ENCODE measurements at regions of chr6 and their contacts with region 1.

Region 1: GRCh38 chr6:87472525-87473418 is at the start of gene SLC35A1:
- DNase-seq: peak; percentile 80 to 92 (median 86)
- H3K4me3 ChIP-seq: peak within 1 kb of the TSS; percentile 67 to 72
- H3K4me3 Mint-ChIP-seq: peak within 1 kb of the TSS; percentile 97 to 99 (median 99)
- H3K27ac ChIP-seq: peak within 1 kb of the TSS; percentile 94
- H3K27ac Mint-ChIP-seq: peak within 1 kb of the TSS; percentile 93 to 100 (median 100)
- H3K4me1 ChIP-seq: peaks cover 18% of the 10 kb centered on the region
- H3K4me1 Mint-ChIP-seq: peaks cover 9 to 27% (median 16%) of the 10 kb centered on the region in 4 donors
- H3K27me3 ChIP-seq: no peaks in the 10 kb centered on the region
- H3K27me3 Mint-ChIP-seq: peaks cover 0 to 2% of the 10 kb centered on the region in 2 donors
- total RNA-seq, gene SLC35A1: 20.4 to 26.2 TPM

Region 2: DNA sequence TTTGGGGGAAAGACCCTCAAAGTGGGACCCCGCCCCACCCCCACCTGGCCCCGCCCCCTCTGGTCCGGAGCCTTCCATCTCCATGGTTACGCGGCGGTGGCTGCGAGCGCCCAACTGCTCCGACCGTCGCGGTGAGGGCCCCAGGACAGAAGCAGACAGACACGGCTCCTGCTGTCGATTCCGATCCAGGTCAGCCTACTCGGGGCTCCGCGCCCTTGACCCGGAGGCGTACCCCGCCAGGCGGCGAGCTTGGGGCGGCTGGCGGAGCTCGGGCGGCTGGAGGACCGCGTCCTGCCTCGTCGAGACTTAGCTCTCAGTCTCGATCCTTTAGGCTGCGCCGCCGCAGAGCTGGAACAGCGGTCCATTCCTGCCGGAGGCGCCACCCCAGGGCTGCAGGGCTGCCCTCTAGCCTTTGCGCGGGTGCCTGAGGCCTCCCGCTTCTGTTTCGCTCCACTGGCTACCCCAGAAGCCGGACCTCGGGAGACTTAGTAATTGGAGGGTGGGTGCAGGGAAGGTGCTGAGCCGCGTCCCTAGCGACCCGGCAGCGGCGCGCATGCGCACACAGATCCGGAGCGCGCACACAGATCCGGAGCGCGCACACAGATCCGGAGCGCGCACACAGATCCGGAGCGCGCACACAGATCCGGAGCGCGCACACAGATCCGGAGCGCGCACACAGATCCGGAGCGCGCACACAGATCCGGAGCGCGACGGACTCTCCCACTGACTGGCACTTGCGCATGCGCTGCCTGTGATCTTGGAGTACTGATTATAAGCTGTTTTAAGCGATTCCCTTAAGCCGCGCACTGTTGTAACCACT is 64.7 kb before region 1 on chr6 and contains the start of gene CFAP206:
- CTCF ChIA-PET with region 1: interaction called, 3 read pairs
- POLR2A ChIA-PET with region 1: interaction called, 8 read pairs
- intact Hi-C with region 1: loop called (anchors 1 kb)
- DNase-seq: peak; percentile 79 to 88 (median 85)
- H3K4me3 ChIP-seq: peak within 1 kb of the TSS; percentile 75 to 84
- H3K4me3 Mint-ChIP-seq: peak within 1 kb of the TSS; percentile 88 to 96 (median 89)
- H3K27ac ChIP-seq: peak within 1 kb of the TSS; percentile 67
- H3K27ac Mint-ChIP-seq: peak within 1 kb of the TSS; percentile 83 to 93 (median 89)
- H3K4me1 ChIP-seq: peaks cover 11% of the 10 kb centered on the region
- H3K4me1 Mint-ChIP-seq: peaks cover 4 to 13% (median 5%) of the 10 kb centered on the region in 4 donors
- H3K27me3 ChIP-seq: no peaks in the 10 kb centered on the region
- H3K27me3 Mint-ChIP-seq: peaks cover 4 to 10% of the 10 kb centered on the region in 2 donors
- total RNA-seq, gene CFAP206: 0.25 TPM in 1 of 2 experiments, not detected in the other

Measured in CD4-positive, alpha-beta memory T cell (primary cell).